Calu3 (cell line): ENCODE measurements at regions of chr5 and their contacts with region 1.

Region 1: GRCh38 chr5:52883110-52883509 is 95.4 kb downstream of the ITGA1 start:
- DNase-seq: no peak
- H3K4me3 Mint-ChIP-seq: no peak overlapping the region
- H3K27ac Mint-ChIP-seq: no peak overlapping the region
- H3K4me1 Mint-ChIP-seq: peaks cover 23% of the 10 kb centered on the region
- H3K27me3 Mint-ChIP-seq: no peaks in the 10 kb centered on the region
- CTCF ChIP-seq: no peak

Region 2: DNA sequence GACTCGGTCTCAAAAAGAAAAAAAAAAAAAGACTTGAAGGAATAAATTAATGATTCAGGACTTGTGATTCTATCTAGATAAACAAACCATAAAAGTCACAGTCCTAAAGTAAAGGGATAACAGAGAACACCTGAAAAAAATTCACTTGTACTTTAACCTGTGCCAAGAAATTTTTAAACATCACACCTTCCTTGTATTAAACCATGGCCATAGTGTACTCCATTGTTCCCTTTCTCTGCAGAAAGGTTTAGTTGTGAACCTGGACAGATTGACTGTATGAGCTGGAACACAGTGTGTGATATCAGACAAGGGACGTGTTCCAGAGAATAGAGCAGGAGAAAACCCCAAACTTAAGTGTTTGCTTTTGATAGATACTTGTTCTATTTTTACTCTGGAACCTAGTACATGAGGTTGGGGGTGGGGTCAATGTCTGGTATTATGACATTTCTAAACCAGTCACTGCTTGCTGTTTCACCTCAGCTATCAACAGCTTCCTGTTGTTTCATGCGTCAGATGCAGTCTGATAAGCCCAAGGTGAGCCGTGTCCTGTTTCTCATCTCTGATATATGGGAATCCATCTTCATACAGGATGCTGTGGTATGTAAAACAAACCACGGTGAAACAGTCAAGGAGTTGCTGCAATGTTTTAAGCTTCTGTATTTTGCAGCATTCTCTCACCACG is 157.9 kb before region 1 on chr5:
- CTCF ChIA-PET with region 1: no interaction called
- intact Hi-C with region 1: no loop called
- DNase-seq: peak; percentile 54
- H3K4me3 Mint-ChIP-seq: no peak overlapping the region
- H3K27ac Mint-ChIP-seq: peak overlapping the region; percentile 15
- H3K4me1 Mint-ChIP-seq: peaks cover 30% of the 10 kb centered on the region
- H3K27me3 Mint-ChIP-seq: no peaks in the 10 kb centered on the region
- CTCF ChIP-seq: no peak

Region 3: DNA sequence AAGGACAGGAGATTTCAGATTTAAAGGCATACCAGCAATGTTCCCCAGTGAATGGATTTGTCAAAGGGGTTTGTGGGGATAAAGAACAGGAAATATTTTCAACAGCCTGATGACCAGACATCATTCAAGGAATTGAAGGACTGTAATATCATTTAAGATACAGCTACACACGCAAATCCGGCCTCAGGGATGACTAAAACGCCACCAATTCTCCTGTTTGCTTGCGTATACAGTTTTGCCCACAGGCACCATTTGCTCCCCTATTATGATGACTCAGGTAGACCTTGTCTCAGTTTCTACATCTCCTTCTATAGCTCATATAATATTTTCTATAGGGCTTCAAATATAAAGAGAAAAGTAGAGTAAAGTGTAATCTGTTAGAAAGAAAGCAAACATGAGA is 125.1 kb before region 1 on chr5:
- CTCF ChIA-PET with region 1: no interaction called
- intact Hi-C with region 1: no loop called
- DNase-seq: no peak
- H3K4me3 Mint-ChIP-seq: no peak overlapping the region
- H3K27ac Mint-ChIP-seq: no peak overlapping the region
- H3K4me1 Mint-ChIP-seq: no peaks in the 10 kb centered on the region
- H3K27me3 Mint-ChIP-seq: no peaks in the 10 kb centered on the region
- CTCF ChIP-seq: no peak

Region 4: DNA sequence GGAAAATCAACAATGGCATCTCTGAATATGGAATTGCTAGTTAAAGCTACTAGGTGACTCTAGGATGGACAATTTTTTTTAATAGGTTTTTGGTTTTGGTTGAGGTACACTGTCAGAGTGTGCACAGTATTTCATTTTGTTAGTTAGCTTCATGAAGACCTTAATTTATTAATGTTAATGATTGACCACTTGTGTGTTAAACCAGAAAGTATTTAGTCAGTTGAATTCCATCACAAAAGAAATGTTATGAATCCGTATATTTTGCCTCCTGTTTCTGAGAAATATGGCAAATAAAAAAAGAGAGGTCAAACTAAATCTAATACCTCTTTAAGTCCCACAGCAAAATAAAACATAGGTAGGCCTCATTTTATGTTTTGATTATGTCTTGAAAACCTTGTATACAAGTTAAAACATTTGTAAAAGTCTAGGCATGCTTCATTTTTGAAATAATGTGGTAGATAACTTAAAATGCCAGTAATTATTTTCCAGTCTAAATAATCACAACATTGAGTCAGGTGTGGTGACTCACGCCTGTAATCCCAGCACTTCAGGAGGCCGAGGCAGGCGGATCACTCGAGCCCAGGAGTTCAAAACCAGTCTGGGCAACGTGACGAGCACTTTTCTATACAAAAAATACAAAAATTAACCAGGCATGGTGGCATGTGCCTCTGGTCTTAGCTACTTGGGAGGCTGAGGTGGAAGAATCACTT is 44.6 kb before region 1 on chr5:
- CTCF ChIA-PET with region 1: interaction called, 7 read pairs
- intact Hi-C with region 1: loop called (anchors 1 kb)
- DNase-seq: no peak
- H3K4me3 Mint-ChIP-seq: no peak overlapping the region
- H3K27ac Mint-ChIP-seq: no peak overlapping the region
- H3K4me1 Mint-ChIP-seq: peaks cover 9% of the 10 kb centered on the region
- H3K27me3 Mint-ChIP-seq: no peaks in the 10 kb centered on the region
- CTCF ChIP-seq: no peak

Region 5: DNA sequence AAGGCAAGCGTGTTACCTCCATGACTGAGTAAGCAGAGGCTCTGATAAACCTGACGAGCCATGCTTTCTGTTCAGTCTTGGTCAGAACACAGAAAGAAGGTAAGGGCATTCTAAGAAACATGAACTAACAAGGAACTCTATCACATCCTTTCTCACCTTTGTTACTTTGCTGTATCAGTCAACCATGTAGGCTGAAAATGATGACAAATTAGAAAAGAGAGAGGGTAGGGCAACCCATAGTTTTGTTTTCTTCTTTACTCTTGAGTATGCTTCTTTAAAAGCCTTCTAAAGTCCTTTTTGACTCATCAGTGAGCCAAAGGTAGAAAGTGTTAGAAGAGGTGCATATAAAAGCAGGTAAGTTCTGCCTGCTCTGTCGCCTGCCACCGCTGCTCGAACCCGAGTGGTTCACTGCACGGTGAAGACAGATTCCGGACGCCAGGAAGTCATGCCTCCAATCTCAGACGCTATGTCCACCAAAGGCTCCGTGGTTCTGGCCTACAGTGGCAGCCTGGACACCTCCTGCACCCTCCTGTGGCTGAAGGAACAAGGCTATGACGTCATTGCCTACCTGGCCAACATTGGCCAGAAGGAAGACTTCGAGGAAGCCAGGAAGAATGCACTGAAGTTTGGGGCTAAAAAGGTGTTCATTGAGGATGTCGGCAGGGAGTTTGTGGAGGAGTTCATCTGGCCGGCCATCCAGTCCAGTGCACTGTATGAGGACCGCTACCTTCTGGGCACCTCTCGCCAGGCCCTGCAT is 975.8 kb after region 1 on chr5:
- CTCF ChIA-PET with region 1: no interaction called
- intact Hi-C with region 1: no loop called
- DNase-seq: no peak
- H3K4me3 Mint-ChIP-seq: no peak overlapping the region
- H3K27ac Mint-ChIP-seq: no peak overlapping the region
- H3K4me1 Mint-ChIP-seq: no peaks in the 10 kb centered on the region
- H3K27me3 Mint-ChIP-seq: no peaks in the 10 kb centered on the region
- CTCF ChIP-seq: no peak